PC-3 (cell line): ENCODE measurements at regions of chr1 and their contacts with region 1.

Region 1: DNA sequence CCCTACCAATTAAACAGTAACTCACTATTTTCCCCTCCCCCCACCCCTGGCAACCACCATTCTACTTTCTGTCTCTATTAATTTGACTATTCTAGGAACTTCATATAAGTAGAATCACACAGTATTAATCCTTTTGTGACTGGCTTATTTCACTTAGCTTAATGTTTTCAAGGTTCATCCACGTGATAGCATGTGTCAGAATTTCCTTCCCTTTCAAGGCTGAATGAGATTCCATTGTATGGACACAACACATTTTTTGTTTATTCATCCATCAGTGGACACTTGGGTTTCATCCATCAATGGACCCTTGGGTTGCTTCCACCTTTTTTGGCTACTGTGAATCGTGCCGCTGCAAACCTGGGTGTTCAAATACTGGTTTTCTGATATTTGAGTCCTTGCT is 41.7 kb downstream of the EIF2D start:
- DNase-seq: no peak
- ATAC-seq: no peak
- H3K4me3 ChIP-seq: no peak overlapping the region
- H3K27ac ChIP-seq: no peak overlapping the region
- H3K4me1 ChIP-seq: no peaks in the 10 kb centered on the region
- H3K27me3 ChIP-seq: no peaks in the 10 kb centered on the region
- CTCF ChIP-seq: no peak

Region 2: DNA sequence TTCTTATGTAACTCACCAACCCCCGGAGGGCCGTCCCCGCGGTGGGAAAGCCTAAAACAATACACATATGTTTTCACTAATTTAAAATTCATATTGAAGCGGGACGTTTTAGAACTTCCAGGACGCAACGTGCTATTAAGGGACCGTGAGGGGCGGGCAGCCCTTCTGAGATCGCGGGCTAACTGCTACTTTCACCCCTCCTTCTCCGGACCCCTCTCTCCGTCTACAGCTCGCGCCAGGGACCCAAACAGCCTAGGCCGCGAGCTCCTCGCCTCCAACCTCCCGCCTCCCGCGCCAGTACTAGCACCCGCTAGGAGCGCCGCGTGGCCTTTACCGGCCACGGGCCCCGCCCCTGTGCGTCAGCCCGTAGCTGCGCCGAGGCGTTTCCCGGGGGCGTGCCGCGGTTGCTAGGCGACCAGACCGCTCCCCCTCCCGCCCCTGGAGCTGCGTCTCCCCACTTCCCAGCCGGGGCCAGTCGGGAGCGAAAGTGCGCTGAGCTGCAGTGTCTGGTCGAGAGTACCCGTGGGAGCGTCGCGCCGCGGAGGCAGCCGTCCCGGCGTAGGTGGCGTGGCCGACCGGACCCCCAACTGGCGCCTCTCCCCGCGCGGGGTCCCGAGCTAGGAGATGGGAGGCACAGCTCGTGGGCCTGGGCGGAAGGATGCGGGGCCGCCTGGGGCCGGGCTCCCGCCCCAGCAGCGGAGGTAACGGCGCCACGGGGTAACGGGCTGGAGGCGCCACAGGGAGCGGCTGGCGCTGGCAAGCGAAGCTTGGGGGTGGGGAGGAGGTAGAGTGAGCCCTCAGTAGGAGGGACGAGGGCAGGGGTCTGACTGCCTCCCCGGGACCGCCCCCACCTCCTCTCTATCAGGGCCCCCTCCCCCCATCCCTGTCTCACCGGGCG is 64.8 kb after region 1 on chr1 and contains the start of gene DYRK3:
- CTCF ChIA-PET with region 1: no interaction called
- POLR2A ChIA-PET with region 1: no interaction called
- intact Hi-C with region 1: no loop called
- DNase-seq: peak; percentile 98
- ATAC-seq: peak; percentile 82
- H3K4me3 ChIP-seq: peak within 1 kb of the TSS; percentile 85
- H3K27ac ChIP-seq: peak within 1 kb of the TSS; percentile 54
- H3K4me1 ChIP-seq: peaks cover 21% of the 10 kb centered on the region
- H3K27me3 ChIP-seq: no peaks in the 10 kb centered on the region
- CTCF ChIP-seq: no peak
- total RNA-seq, gene DYRK3: 12.1 and 14.1 TPM in 2 replicates

Region 3: GRCh38 chr1:206972728-206973127 is 402.2 kb after region 1 on chr1:
- CTCF ChIA-PET with region 1: no interaction called
- POLR2A ChIA-PET with region 1: interaction called, 18 read pairs
- intact Hi-C with region 1: no loop called
- DNase-seq: peak; percentile 13
- ATAC-seq: peak; percentile 77
- H3K4me3 ChIP-seq: no peak overlapping the region
- H3K27ac ChIP-seq: no peak overlapping the region
- H3K4me1 ChIP-seq: peaks cover 7% of the 10 kb centered on the region; the same call in 1 of the 2 replicates
- H3K27me3 ChIP-seq: no peaks in the 10 kb centered on the region
- CTCF ChIP-seq: no peak